ENCODE measurements at regions of chr22 and their contacts with region 1.

Region 1: GRCh38 chr22:37472418-37473006 is 13.7 kb downstream of the MFNG start:
- DNase-seq: peak; percentile 52
- H3K4me3 Mint-ChIP-seq: no peak overlapping the region
- H3K27ac Mint-ChIP-seq: peak overlapping the region; percentile 49
- H3K4me1 Mint-ChIP-seq: no peaks in the 10 kb centered on the region
- H3K27me3 Mint-ChIP-seq: no peaks in the 10 kb centered on the region

Region 2: DNA sequence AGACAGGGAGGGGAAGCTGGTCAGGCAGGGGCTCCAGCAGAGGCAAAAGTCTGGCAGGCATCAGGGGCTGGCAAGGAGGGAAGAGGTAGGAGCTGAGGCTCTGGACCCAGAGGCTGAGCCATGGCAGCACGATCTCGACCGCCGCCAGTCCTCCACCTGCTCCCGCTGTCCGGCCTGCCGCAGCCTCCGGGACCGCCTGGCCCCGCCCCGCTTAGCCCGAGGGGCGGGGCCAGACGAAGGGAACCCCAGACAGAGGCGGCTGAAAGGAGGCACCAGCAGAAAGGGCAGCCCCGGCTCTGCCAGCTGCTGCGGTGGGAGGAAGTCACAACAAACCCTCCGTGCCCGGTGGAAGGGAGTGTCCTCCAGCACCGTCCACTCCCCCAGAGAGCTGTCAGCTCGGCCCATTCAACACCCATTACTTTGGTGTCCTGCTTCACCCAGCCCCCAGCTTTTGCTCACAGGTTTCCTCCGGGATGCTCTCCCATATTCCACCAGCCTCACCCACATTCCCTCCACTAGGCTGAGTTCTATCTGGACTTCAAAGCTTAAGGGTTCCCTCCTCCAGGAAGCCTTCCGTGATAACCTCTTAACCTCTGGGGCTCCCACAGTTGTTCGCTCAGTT is 13.8 kb after region 1 on chr22 and contains the start of gene MFNG:
- CTCF ChIA-PET with region 1: interaction called, 23 read pairs
- POLR2A ChIA-PET with region 1: interaction called, 3 read pairs
- intact Hi-C with region 1: no loop called
- DNase-seq: peak; percentile 87
- H3K4me3 Mint-ChIP-seq: peak within 1 kb of the TSS; percentile 89
- H3K27ac Mint-ChIP-seq: peak within 1 kb of the TSS; percentile 92
- H3K4me1 Mint-ChIP-seq: peaks cover 60% of the 10 kb centered on the region
- H3K27me3 Mint-ChIP-seq: no peaks in the 10 kb centered on the region
- total RNA-seq, gene MFNG: 101 to 106 TPM

Region 3: GRCh38 chr22:37492428-37493344 is 20.2 kb after region 1 on chr22:
- CTCF ChIA-PET with region 1: interaction called, 32 read pairs
- POLR2A ChIA-PET with region 1: no interaction called
- intact Hi-C with region 1: no loop called
- DNase-seq: peak; percentile 77
- H3K4me3 Mint-ChIP-seq: no peak overlapping the region
- H3K27ac Mint-ChIP-seq: peak overlapping the region; percentile 2
- H3K4me1 Mint-ChIP-seq: peaks cover 30% of the 10 kb centered on the region
- H3K27me3 Mint-ChIP-seq: no peaks in the 10 kb centered on the region

Region 4: GRCh38 chr22:37498289-37498909 is 25.9 kb after region 1 on chr22:
- CTCF ChIA-PET with region 1: interaction called, 32 read pairs
- POLR2A ChIA-PET with region 1: no interaction called
- intact Hi-C with region 1: loop called (anchors 2 kb)
- DNase-seq: peak; percentile 80
- H3K4me3 Mint-ChIP-seq: no peak overlapping the region
- H3K27ac Mint-ChIP-seq: no peak overlapping the region
- H3K4me1 Mint-ChIP-seq: peaks cover 7% of the 10 kb centered on the region
- H3K27me3 Mint-ChIP-seq: peaks cover 3% of the 10 kb centered on the region

Region 5: DNA sequence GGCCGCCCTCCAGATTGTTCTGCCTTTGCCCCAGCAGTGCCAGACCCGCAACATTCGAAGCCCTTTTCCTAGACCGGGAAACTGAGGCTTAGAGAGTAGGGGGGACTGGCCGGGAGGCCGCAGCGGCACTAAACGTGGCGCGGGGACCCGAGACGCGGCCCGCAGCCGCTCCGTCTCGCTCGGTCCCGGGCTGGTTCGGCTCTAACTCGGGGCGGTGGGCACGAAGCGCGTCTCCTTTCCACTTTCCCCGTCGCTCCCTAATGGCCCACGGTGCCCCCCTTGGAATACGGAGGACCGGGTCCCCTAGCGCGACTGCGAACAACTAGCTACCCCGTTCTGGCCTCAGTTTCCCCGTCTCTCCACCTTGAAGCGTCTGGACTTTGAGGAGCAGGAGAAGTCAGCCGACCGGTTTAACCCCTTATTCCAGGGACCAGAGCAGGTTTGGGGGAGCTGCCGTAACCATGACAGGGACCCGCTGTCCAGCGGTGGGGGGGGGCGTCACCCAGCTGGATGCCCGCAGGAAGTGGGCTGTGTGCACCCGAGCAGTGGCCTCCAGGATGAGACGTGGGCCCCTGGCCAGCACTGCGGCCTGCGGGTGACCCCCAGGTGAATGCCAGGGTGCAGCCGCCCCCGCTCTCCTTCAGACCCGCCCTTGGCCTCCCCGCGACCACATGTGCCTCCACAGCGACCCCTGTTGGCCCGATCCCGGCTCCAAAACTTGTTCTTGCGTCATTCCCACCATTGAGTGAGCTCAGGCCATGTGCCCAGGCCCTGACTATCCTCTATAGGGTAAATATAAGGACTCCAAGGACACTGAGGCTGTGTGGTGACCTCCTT is 88.9 kb after region 1 on chr22:
- CTCF ChIA-PET with region 1: interaction called, 45 read pairs
- POLR2A ChIA-PET with region 1: no interaction called
- intact Hi-C with region 1: no loop called
- DNase-seq: peak; percentile 91
- H3K4me3 Mint-ChIP-seq: peak overlapping the region; percentile 54
- H3K27ac Mint-ChIP-seq: no peak overlapping the region
- H3K4me1 Mint-ChIP-seq: peaks cover 29% of the 10 kb centered on the region
- H3K27me3 Mint-ChIP-seq: peaks cover 48% of the 10 kb centered on the region

Measured in activated CD4-positive, alpha-beta memory T cell treated with anti-CD3 and anti-CD28 coated beads for 36 hours (primary cell).